WTC11 (cell line): ENCODE measurements at regions of chr4 and their contacts with region 1.

Region 1: DNA sequence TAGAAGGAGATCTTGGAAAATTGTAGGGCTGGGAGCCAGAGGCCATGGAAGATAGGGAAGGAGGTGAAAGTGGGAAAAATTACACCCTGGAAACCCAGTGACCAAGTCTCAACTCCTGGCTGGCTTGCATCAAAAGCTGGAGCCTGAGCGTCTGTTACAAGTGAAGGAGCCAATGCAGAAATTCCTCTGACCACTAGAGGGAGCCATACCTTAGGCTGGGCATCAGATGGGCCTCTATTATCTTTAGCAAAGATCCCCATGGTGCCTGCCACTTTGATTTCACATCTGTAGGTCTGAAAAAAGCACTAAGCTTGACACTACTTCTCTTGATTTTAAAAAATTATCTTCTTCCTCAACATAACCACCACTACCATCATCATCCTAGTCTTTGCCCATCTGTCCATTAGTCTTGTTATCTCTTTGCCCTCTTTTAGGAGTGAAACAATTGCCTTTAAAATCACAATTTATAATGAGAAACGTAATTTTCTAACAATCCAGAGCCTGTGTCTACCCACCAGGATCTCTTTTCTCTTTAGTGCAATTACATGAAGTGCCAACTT is 62.9 kb downstream of the ANAPC4 start:
- DNase-seq: peak; percentile 67
- ATAC-seq: peak; percentile 68
- H3K4me3 Mint-ChIP-seq: no peak overlapping the region
- H3K27ac Mint-ChIP-seq: no peak overlapping the region
- H3K4me1 Mint-ChIP-seq: 0 out of 2 replicates have a peak, but pooled peaks cover 5% of the 10 kb centered on the region
- H3K27me3 Mint-ChIP-seq: no peaks in the 10 kb centered on the region
- CTCF ChIP-seq: peak; percentile 89

Region 2: GRCh38 chr4:25531272-25531671 is 91.3 kb after region 1 on chr4:
- CTCF ChIA-PET with region 1: interaction called, 13 read pairs
- POLR2A ChIA-PET with region 1: no interaction called
- DNase-seq: no peak
- ATAC-seq: peak; percentile 58; the same call in 1 of the 2 replicates
- H3K4me3 Mint-ChIP-seq: no peak overlapping the region
- H3K27ac Mint-ChIP-seq: no peak overlapping the region
- H3K4me1 Mint-ChIP-seq: peaks cover 17% of the 10 kb centered on the region
- H3K27me3 Mint-ChIP-seq: peaks cover 45% of the 10 kb centered on the region
- CTCF ChIP-seq: peak; percentile 36

Region 3: GRCh38 chr4:25612469-25612868 is 172.5 kb after region 1 on chr4:
- CTCF ChIA-PET with region 1: interaction called, 11 read pairs
- POLR2A ChIA-PET with region 1: no interaction called
- DNase-seq: no peak
- ATAC-seq: no peak
- H3K4me3 Mint-ChIP-seq: no peak overlapping the region
- H3K27ac Mint-ChIP-seq: no peak overlapping the region
- H3K4me1 Mint-ChIP-seq: no peaks in the 10 kb centered on the region
- H3K27me3 Mint-ChIP-seq: no peaks in the 10 kb centered on the region
- CTCF ChIP-seq: no peak

Region 4: GRCh38 chr4:25667931-25668557 is 228.0 kb after region 1 on chr4:
- CTCF ChIA-PET with region 1: interaction called, 17 read pairs
- POLR2A ChIA-PET with region 1: no interaction called
- DNase-seq: peak; percentile 29
- ATAC-seq: peak; percentile 49
- H3K4me3 Mint-ChIP-seq: no peak overlapping the region
- H3K27ac Mint-ChIP-seq: no peak overlapping the region; the same call in 1 of the 2 replicates
- H3K4me1 Mint-ChIP-seq: peaks cover 14% of the 10 kb centered on the region
- H3K27me3 Mint-ChIP-seq: no peaks in the 10 kb centered on the region
- CTCF ChIP-seq: no peak

Region 5: GRCh38 chr4:25792200-25792791 is 352.3 kb after region 1 on chr4:
- CTCF ChIA-PET with region 1: interaction called, 16 read pairs
- POLR2A ChIA-PET with region 1: no interaction called
- DNase-seq: peak; percentile 67
- ATAC-seq: peak; percentile 86
- H3K4me3 Mint-ChIP-seq: no peak overlapping the region
- H3K27ac Mint-ChIP-seq: 0 out of 2 replicates have a peak overlapping the region, but pooled peaks have one; percentile 77
- H3K4me1 Mint-ChIP-seq: peaks cover 15% of the 10 kb centered on the region
- H3K27me3 Mint-ChIP-seq: no peaks in the 10 kb centered on the region
- CTCF ChIP-seq: peak; percentile 69